Naive thymus-derived CD4-positive, alpha-beta T cell (primary cell): ENCODE measurements at regions of chr12 and their contacts with region 1.

Region 1: GRCh38 chr12:120649442-120650232 is 9.2 kb downstream of the CABP1 start:
- DNase-seq: no peak
- ATAC-seq: no peak
- H3K4me3 ChIP-seq: no peak overlapping the region
- H3K4me3 Mint-ChIP-seq: peak overlapping the region in 8 of 10 donors; percentile 31 to 78 (median 49)
- H3K27ac ChIP-seq: no peak overlapping the region
- H3K27ac Mint-ChIP-seq: no peak overlapping the region
- H3K4me1 ChIP-seq: peaks cover 6 to 7% of the 10 kb centered on the region in 2 donors
- H3K4me1 Mint-ChIP-seq: peaks cover 6 to 16% (median 13%) of the 10 kb centered on the region in 7 donors
- H3K27me3 ChIP-seq: peaks cover 3 to 5% of the 10 kb centered on the region in 2 donors
- H3K27me3 Mint-ChIP-seq: peaks cover 42 to 63% (median 58%) of the 10 kb centered on the region in 5 donors

Region 2: DNA sequence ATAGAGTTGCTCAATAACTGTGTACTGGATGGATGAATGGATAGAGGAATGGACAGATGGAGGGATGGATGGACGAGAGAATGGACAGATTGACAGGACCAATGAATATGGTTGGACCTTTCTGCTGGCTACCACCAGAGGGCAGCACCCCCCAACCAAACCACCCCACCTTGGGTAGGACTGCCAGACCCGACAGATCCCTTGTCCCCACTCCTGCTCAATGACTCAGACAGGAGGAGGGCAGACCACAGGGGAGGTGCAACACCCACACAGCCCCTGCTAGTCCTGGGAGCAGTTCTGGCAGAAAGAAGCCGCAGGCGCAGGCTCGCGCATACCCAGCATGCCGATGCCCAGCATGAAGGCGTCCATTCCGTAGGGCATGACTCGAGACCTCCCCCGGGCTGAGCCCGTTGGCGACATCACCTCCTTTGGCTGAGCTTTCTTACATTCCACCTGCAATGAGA is 293.0 kb before region 1 on chr12:
- CTCF ChIA-PET with region 1: interaction called, 3 read pairs
- POLR2A ChIA-PET with region 1: no interaction called
- intact Hi-C with region 1: loop called in 1 of 2 experiments (anchors 1 kb)
- DNase-seq: peak; percentile 47 to 78 (median 61)
- ATAC-seq: peak; percentile 88
- H3K4me3 ChIP-seq: no peak overlapping the region
- H3K4me3 Mint-ChIP-seq: no peak overlapping the region
- H3K27ac ChIP-seq: no peak overlapping the region
- H3K27ac Mint-ChIP-seq: no peak overlapping the region
- H3K4me1 ChIP-seq: no peaks in the 10 kb centered on the region
- H3K4me1 Mint-ChIP-seq: peaks cover 0 to 3% (median 0%) of the 10 kb centered on the region in 7 donors
- H3K27me3 ChIP-seq: no peaks in the 10 kb centered on the region
- H3K27me3 Mint-ChIP-seq: peaks cover 30 to 36% (median 31%) of the 10 kb centered on the region in 5 donors

Region 3: GRCh38 chr12:120965534-120966091 is 316.0 kb after region 1 on chr12:
- CTCF ChIA-PET with region 1: no interaction called
- POLR2A ChIA-PET with region 1: no interaction called
- intact Hi-C with region 1: no loop called
- DNase-seq: no peak
- ATAC-seq: no peak
- H3K4me3 ChIP-seq: no peak overlapping the region
- H3K4me3 Mint-ChIP-seq: no peak overlapping the region
- H3K27ac ChIP-seq: no peak overlapping the region
- H3K27ac Mint-ChIP-seq: no peak overlapping the region
- H3K4me1 ChIP-seq: peaks cover 0 to 3% of the 10 kb centered on the region in 2 donors
- H3K4me1 Mint-ChIP-seq: peaks cover 0 to 14% (median 2%) of the 10 kb centered on the region in 7 donors
- H3K27me3 ChIP-seq: no peaks in the 10 kb centered on the region
- H3K27me3 Mint-ChIP-seq: peaks cover 0 to 3% (median 0%) of the 10 kb centered on the region in 5 donors